Activated B cell treated with CpG ODN at 0.5 μM for 24 hours (primary cell): ENCODE measurements at regions of chr4 and their contacts with region 1.

Region 1: DNA sequence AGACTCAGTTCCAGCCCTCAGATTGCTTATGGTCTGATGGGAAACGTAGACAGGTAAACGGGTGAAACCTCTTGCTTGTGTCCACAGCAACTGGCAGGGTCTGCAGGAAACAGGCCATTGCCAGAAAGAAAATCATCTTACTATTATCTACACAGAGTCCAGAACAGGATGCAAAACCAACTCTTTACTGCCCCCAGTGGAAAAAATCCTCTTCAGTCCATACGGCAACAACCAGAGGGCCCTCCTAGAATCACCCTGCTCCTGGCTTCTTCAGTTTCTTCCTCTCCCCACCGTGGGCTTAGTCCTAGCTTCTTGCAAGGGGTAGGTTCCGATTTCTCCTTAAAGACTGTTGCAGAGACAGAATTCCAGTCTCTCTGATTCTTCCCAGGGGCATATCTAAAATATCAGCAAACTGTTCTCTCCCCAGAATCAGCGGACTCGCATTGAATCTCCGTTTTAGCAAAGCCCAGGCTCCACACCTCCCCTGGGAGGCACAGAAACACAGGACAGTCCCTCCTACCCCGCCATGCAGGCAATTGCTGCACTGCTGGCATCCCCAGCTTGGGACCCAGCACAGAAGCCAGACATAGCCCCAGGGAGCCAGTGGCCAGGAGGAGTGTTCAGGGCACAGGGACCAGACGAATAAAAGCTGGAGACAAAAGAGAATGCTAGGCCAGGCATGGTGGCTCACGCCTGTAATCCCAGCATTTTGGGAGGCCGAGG is 41.0 kb upstream of the SH3RF1 start:
- DNase-seq: no peak
- ATAC-seq: peak; percentile 74
- H3K4me3 Mint-ChIP-seq: no peak overlapping the region
- H3K27ac Mint-ChIP-seq: no peak overlapping the region
- H3K4me1 Mint-ChIP-seq: no peaks in the 10 kb centered on the region
- H3K27me3 Mint-ChIP-seq: peaks cover 3% of the 10 kb centered on the region
- CTCF ChIP-seq: no peak

Region 2: DNA sequence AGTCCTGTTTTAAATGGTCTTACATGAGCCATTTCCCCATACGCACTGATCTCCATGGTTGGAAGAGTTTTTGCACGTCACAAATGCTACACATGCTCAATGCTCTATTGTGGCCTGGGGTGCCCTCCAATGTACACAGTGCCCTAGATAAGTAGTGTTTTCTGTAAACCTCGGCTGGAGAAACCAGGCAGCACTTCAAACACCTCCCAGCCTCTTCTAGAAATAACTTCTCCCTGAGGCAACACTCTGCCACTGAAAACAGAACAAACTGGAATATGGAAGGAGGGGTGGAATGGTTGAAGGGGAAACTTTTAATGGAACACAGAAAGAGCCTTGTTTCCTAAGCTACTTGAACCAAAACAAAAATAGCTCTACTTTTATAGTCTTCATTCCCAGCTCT is 177.9 kb before region 1 on chr4:
- CTCF ChIA-PET with region 1: no interaction called
- POLR2A ChIA-PET with region 1: no interaction called
- intact Hi-C with region 1: no loop called
- DNase-seq: no peak
- ATAC-seq: no peak
- H3K4me3 Mint-ChIP-seq: no peak overlapping the region
- H3K27ac Mint-ChIP-seq: no peak overlapping the region
- H3K4me1 Mint-ChIP-seq: no peaks in the 10 kb centered on the region
- H3K27me3 Mint-ChIP-seq: no peaks in the 10 kb centered on the region
- CTCF ChIP-seq: no peak

Region 3: DNA sequence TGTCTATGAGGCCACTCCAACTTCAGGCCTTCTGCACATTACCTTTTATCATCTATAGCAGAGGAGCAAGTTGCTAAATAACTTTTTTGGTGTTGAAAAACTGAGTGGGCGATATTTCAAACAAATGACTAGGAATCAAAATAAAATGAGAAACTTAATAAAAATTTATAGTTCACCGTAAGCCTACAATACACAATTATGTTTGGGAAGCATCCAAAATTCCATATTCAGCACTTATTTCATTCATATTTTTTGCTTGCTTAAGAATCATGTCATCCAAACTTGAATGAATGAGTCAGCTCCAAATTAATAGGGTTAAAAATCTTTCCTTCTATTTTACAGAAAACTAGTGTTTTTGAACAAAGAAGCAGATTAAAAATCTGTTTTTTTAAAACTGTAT is 160.1 kb before region 1 on chr4:
- CTCF ChIA-PET with region 1: no interaction called
- POLR2A ChIA-PET with region 1: no interaction called
- intact Hi-C with region 1: loop called (anchors 1 kb)
- DNase-seq: no peak
- ATAC-seq: no peak
- H3K4me3 Mint-ChIP-seq: no peak overlapping the region
- H3K27ac Mint-ChIP-seq: no peak overlapping the region
- H3K4me1 Mint-ChIP-seq: peaks cover 11% of the 10 kb centered on the region
- H3K27me3 Mint-ChIP-seq: no peaks in the 10 kb centered on the region
- CTCF ChIP-seq: no peak

Region 4: DNA sequence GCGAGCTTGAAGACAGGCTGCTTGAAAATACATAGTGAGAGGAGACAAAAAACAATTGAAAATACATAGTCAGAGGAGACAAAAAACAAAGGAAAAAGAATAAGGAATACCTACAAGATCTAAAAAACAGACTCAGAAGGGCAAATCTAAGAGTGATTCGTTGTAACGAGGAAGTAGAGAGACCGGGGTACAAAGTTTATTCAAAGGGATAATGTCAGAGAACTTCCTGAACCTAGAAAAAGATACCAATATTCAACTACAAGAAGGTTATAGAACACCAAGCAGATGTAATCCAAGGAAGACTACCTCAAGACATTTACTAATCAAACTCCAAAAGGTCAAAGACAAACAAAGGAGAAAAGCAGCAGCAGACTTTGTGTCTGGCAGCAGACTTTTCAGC is 135.0 kb after region 1 on chr4:
- CTCF ChIA-PET with region 1: no interaction called
- POLR2A ChIA-PET with region 1: no interaction called
- intact Hi-C with region 1: no loop called
- DNase-seq: no peak
- ATAC-seq: no peak
- H3K4me3 Mint-ChIP-seq: no peak overlapping the region
- H3K27ac Mint-ChIP-seq: no peak overlapping the region
- H3K4me1 Mint-ChIP-seq: no peaks in the 10 kb centered on the region
- H3K27me3 Mint-ChIP-seq: no peaks in the 10 kb centered on the region
- CTCF ChIP-seq: no peak